ENCODE measurements at regions of chr7 and their contacts with region 1.

Region 1: GRCh38 chr7:150898475-150899011 is 46.2 kb downstream of the AOC1 start:
- DNase-seq: peak; percentile 88
- ATAC-seq: peak; percentile 64

Region 2: DNA sequence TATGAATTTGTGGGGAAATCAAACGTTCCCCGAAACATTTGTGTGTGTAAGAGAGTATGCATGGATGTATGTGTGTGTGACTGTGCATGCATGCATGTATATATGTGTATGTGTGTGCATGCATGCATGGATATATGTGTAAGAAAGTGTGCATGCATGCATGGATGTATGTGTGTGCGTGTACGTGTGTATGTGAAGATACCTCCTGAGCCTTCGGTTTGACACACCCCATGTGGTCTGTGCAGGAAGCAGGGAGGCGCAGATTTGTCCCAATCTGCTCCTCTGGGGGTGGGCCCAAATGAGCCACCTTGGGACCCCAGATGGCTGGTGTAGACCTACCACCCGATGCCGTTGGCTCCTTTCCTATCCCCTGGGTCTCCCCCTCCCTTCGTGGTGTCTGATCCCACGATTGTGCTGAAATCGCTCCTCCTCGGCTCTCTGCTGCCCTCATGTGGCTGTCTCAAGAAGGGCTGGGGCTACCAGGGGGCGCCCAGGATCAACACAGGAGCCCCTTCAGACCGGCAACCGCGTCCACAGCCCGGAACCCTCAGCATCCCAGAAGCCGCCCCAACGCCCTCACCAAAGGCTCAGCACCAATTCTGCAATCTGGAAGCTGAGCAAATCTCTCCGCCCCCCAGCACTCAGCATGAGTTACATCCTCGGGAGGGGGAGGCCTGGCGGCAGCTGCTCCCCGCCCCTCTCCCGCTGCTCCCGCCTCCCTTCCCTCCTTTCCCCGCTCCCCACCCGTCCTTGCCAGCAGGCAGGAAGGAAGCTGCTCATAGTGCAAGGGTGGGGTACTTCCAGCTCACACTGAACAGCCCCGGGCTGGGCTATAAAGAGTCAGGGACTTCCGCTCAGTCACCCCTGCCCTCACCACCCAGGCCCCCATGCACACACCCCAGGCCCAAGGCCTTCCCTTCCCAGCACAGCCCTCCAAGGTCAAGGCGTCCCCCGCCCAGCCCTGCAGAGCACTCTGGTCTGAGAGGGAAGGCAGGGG is 90.0 kb after region 1 on chr7:
- intact Hi-C with region 1: loop called (anchors 1 kb)
- DNase-seq: peak; percentile 78
- ATAC-seq: peak; percentile 47

Measured in Right ventricle myocardium inferior (tissue), 1 donor.